Ascending aorta (tissue), 2 donors: ENCODE measurements at regions of chr2 and their contacts with region 1.

Region 1: DNA sequence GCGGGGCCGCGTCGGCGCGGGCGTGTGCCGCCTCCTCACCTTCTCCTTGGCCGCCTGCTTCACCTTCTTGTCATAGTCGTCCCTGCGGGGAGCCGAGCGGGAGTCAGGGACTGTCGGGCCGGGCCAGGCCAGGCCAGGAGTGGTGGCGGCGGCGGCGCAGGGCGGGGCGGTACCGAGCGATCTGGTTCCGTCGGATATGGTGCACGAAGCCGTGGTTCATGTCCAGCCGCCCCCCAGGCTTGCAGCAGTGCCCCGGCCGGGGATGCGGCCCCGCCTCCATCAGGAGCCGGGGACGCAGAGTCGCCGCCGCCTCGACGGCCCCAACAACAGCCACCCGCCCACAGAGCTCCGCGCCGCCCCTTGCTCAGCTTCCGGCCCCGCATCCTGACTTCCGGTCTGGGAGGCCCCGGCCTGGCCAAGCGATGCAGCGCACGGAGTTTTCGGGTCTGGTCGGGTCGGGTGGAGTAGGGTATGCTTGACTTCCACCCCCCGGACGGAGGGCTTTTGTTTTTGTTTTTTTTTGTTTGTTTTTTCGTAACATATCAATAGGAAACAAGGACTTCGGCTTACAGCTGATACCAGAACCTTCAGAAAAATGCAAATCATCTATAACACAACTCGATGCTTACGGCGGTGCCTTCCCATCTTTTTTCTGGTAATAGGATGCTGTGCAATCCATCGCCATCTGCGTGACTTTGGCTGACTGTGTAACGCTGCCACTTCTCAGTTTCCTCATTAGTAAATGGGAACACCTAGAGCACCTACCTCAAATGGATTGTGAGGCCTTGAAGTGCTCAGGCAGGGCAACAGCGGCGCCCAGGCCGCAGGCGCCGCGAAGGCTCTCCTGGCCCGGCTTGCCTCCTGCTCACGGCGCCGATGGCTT is at the start of gene C2orf68:
- DNase-seq: peak; percentile 59 to 95
- H3K4me3 ChIP-seq: peak within 1 kb of the TSS; percentile 96
- H3K27ac ChIP-seq: peak within 1 kb of the TSS; percentile 83 to 87
- H3K4me1 ChIP-seq: peaks cover 0 to 23% of the 10 kb centered on the region in 2 donors
- H3K27me3 ChIP-seq: no peaks in the 10 kb centered on the region
- CTCF ChIP-seq: no peak
- total RNA-seq, gene C2orf68: 1.6 TPM

Region 2: GRCh38 chr2:85420536-85421259 is 191.2 kb before region 1 on chr2:
- intact Hi-C with region 1: loop called (anchors 2 kb)
- DNase-seq: peak; percentile 52 to 95
- H3K4me3 ChIP-seq: peak overlapping the region in 1 of 2 donors; percentile 32
- H3K27ac ChIP-seq: peak overlapping the region; percentile 30 to 60
- H3K4me1 ChIP-seq: peaks cover 6 to 11% of the 10 kb centered on the region in 2 donors
- H3K27me3 ChIP-seq: no peaks in the 10 kb centered on the region
- CTCF ChIP-seq: peak; percentile 100

Region 3: GRCh38 chr2:85561317-85561979 is 50.5 kb before region 1 on chr2 and contains the start of gene GGCX:
- intact Hi-C with region 1: loop called (anchors 2 kb)
- DNase-seq: peak; percentile 82 to 97
- H3K4me3 ChIP-seq: peak within 1 kb of the TSS; percentile 77 to 79
- H3K27ac ChIP-seq: peak within 1 kb of the TSS; percentile 76 to 86
- H3K4me1 ChIP-seq: peaks cover 3 to 16% of the 10 kb centered on the region in 2 donors
- H3K27me3 ChIP-seq: no peaks in the 10 kb centered on the region
- CTCF ChIP-seq: peak in 2 of 3 experiments; percentile 10 to 35
- total RNA-seq, gene GGCX: 31.9 TPM

Region 4: GRCh38 chr2:85584857-85585783 is 26.8 kb before region 1 on chr2:
- intact Hi-C with region 1: loop called (anchors 2 kb)
- DNase-seq: peak in 1 of 2 donors; percentile 81
- H3K4me3 ChIP-seq: peak overlapping the region; percentile 61 to 74
- H3K27ac ChIP-seq: peak overlapping the region; percentile 84 to 95
- H3K4me1 ChIP-seq: peaks cover 0 to 39% of the 10 kb centered on the region in 2 donors
- H3K27me3 ChIP-seq: no peaks in the 10 kb centered on the region
- CTCF ChIP-seq: no peak

Region 5: DNA sequence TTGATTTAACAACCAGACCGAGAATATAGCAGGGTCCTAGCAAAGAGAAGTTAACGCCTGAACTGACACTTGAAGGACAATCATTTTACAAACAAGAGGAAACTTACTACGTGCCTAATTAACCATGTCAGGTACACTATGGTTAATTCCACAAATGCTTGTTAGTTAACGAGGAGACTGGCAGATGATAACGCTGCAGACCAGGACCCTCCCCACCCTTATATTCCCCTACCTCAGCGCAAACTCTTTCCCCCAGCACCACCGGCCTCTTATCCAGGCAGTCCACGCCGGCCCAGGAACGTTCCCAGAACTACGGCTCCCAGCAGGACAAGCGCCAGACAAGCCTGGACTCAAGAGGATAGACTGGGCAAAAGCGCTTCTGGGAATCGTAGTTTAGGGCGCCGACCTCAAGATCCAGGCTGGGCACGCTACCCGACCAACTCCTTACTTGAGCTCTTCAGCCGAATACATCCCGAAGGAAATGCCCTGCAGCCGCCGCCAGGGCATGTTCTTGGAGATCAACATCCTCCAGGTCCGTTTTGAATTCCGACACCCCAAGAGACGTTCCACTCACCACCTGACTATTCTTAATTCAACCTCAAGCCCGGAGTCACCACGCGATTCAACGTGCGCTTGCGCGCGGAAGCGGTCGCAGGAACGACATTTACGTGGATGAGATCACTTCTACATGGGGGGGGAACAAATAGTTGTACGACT is 493.5 kb after region 1 on chr2 and contains the start of gene POLR1A:
- intact Hi-C with region 1: loop called (anchors 10 kb)
- DNase-seq: peak; percentile 68 to 94
- H3K4me3 ChIP-seq: peak within 1 kb of the TSS; percentile 81 to 91
- H3K27ac ChIP-seq: peak within 1 kb of the TSS; percentile 77 to 78
- H3K4me1 ChIP-seq: peaks cover 0 to 26% of the 10 kb centered on the region in 2 donors
- H3K27me3 ChIP-seq: no peaks in the 10 kb centered on the region
- CTCF ChIP-seq: no peak
- total RNA-seq, gene POLR1A: 8.0 TPM